Ovary (tissue), 10 donors: ENCODE measurements at regions of chr5 and their contacts with region 1.

Region 1: GRCh38 chr5:139903795-139904565 is 108.4 kb downstream of the PSD2 start:
- DNase-seq: peak; percentile 55 to 80 (median 68)
- H3K4me3 ChIP-seq: peak overlapping the region; percentile 49
- H3K27ac ChIP-seq: peak overlapping the region; percentile 47 to 55
- H3K4me1 ChIP-seq: peaks cover 14% of the 10 kb centered on the region
- H3K27me3 ChIP-seq: no peaks in the 10 kb centered on the region
- CTCF ChIP-seq: no peak
- EP300 ChIP-seq: no peak
- POLR2A ChIP-seq: no peak

Region 2: DNA sequence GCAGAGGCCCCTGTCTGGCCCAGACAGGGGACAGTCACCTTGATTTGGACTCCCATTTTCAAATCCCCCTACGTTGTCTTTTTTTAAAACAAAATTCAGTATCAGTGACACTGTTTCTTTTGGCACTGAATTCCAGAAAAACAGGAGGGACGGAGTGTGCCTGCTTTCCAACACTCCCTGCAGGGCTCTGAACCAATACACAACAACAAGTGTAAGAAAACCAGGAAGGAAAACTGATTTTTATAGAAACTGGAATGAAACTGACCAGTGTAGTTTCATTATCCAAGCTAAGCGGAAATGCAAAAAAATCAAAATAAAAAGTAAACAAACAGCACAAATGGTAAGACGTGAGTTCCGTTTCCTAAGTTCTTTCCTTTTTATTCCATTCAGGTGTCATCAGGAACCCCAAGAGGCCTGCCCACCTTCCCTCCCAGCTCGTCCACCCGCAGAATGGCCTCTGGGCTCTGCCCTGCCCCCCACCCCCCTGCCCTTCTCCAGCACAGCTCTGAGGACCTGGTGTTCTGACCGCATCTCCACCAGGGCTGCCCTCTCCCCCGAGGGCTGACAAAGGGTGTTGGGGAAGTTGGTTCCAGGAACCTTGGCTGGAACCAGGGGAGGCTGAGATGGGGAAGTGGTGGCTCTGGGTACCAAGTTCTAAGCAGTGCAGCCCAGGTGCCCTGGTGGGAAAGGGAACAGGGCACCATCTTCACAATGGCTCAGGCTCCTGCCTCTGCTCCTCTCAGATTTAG is 34.8 kb before region 1 on chr5:
- intact Hi-C with region 1: loop called in 2 of 4 experiments (anchors 5 kb)
- DNase-seq: peak in 1 of 5 donors; percentile 62
- H3K4me3 ChIP-seq: no peak overlapping the region
- H3K27ac ChIP-seq: peak overlapping the region; percentile 44 to 72
- H3K4me1 ChIP-seq: peaks cover 32% of the 10 kb centered on the region
- H3K27me3 ChIP-seq: no peaks in the 10 kb centered on the region
- CTCF ChIP-seq: no peak
- EP300 ChIP-seq: no peak
- POLR2A ChIP-seq: no peak

Region 3: GRCh38 chr5:139955053-139955605 is 51.1 kb after region 1 on chr5:
- intact Hi-C with region 1: loop called in 1 of 4 experiments (anchors 10 kb)
- DNase-seq: no peak
- H3K4me3 ChIP-seq: no peak overlapping the region
- H3K27ac ChIP-seq: no peak overlapping the region
- H3K4me1 ChIP-seq: peaks cover 5% of the 10 kb centered on the region
- H3K27me3 ChIP-seq: no peaks in the 10 kb centered on the region
- CTCF ChIP-seq: no peak
- EP300 ChIP-seq: no peak
- POLR2A ChIP-seq: no peak